Pancreas (tissue), 10 donors: ENCODE measurements at regions of chr15 and their contacts with region 1.

Region 1: GRCh38 chr15:96273317-96274086 is 57.0 kb upstream of the NR2F2 start:
- DNase-seq: no peak
- ATAC-seq: peak in 1 of 4 donors; percentile 21
- H3K4me3 ChIP-seq: no peak overlapping the region
- H3K27ac ChIP-seq: no peak overlapping the region
- H3K4me1 ChIP-seq: no peaks in the 10 kb centered on the region
- H3K27me3 ChIP-seq: no peaks in the 10 kb centered on the region
- CTCF ChIP-seq: no peak

Region 2: GRCh38 chr15:95981209-95981608 is 292.3 kb before region 1 on chr15:
- intact Hi-C with region 1: no loop called
- DNase-seq: no peak
- ATAC-seq: no peak
- H3K4me3 ChIP-seq: no peak overlapping the region
- H3K27ac ChIP-seq: no peak overlapping the region
- H3K4me1 ChIP-seq: no peaks in the 10 kb centered on the region
- H3K27me3 ChIP-seq: no peaks in the 10 kb centered on the region
- CTCF ChIP-seq: no peak

Region 3: GRCh38 chr15:96330450-96331145 is 57.1 kb after region 1 on chr15 and contains the start of gene NR2F2:
- intact Hi-C with region 1: loop called in 1 of 3 experiments (anchors 10 kb)
- DNase-seq: peak; percentile 95 to 99 (median 96)
- ATAC-seq: peak; percentile 70 to 83 (median 79)
- H3K4me3 ChIP-seq: peak within 1 kb of the TSS; percentile 52 to 65 (median 60)
- H3K27ac ChIP-seq: peak within 1 kb of the TSS; percentile 78 to 95 (median 90)
- H3K4me1 ChIP-seq: peaks cover 0 to 6% (median 0%) of the 10 kb centered on the region in 3 donors
- H3K27me3 ChIP-seq: no peaks in the 10 kb centered on the region
- CTCF ChIP-seq: no peak
- total RNA-seq, gene NR2F2: 8.3 to 25.6 (median 14.0) TPM